ENCODE measurements at regions of chr17 and their contacts with region 1.

Region 1: GRCh38 chr17:28726226-28727130 is at the start of gene TLCD1:
- DNase-seq: peak; percentile 73 to 92
- ATAC-seq: peak; percentile 44 to 56
- H3K4me3 ChIP-seq: peak within 1 kb of the TSS; percentile 63
- H3K27ac ChIP-seq: peak within 1 kb of the TSS; percentile 94 to 98
- H3K4me1 ChIP-seq: peaks cover 46% of the 10 kb centered on the region
- CTCF ChIP-seq: peak; percentile 100
- EP300 ChIP-seq: no peak
- POLR2A ChIP-seq: no peak
- RAD21 ChIP-seq: peak; percentile 100
- polyA plus RNA-seq, gene TLCD1: 83.3 and 86.7 TPM in 2 replicates

Region 2: DNA sequence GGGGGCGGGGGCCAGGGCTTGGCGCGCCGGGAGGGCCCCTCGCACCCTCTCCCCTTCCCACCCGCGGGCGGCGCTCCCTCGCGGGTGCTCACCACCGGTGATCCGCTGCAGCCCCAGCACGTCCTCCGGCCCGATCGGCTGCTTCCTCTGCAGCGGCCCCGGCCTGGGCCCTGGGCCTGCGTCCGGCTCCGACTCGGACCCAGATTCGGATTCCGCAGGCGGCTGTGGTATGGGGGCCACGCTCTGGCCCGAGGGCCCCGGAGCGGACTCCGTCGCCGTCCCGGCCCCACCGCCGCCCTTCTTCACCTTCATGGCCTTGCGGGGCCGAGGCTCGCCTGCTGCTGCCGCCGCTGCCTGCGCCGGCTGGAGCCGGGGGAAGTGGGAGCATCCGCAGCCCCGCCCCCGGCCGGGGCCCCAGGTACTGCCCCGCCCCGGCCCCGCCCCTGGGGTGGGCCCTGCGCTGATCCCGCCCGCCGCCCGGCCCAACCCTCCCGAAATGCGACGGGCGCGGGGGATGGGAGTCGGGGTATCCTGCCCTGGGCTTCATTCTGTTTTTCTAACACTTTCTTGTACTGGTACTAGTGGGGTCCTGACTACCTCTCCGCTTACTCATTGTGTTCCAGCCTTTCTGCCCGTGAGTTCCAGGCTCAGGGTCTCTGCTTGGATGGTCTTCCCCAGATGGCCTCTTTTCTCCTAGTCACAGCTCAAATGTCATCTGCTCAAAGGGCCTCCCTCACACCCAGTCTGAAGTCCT is 174.1 kb before region 1 on chr17 and contains the start of gene UNC119:
- CTCF ChIA-PET with region 1: no interaction called
- POLR2A ChIA-PET with region 1: no interaction called
- DNase-seq: peak; percentile 59 to 89
- ATAC-seq: peak; percentile 75 to 91
- H3K4me3 ChIP-seq: peak within 1 kb of the TSS; percentile 97
- H3K27ac ChIP-seq: peak within 1 kb of the TSS; percentile 79 to 90
- H3K4me1 ChIP-seq: peaks cover 11% of the 10 kb centered on the region
- CTCF ChIP-seq: no peak
- EP300 ChIP-seq: no peak
- POLR2A ChIP-seq: peak; percentile 88
- RAD21 ChIP-seq: no peak
- polyA plus RNA-seq, gene UNC119: 50.5 and 53.5 TPM in 2 replicates

Region 3: GRCh38 chr17:28684963-28685362 is 41.5 kb before region 1 on chr17:
- CTCF ChIA-PET with region 1: interaction called, 23 read pairs
- POLR2A ChIA-PET with region 1: no interaction called
- DNase-seq: peak; percentile 63 to 86
- ATAC-seq: peak; percentile 81 to 87
- H3K4me3 ChIP-seq: no peak overlapping the region
- H3K27ac ChIP-seq: no peak overlapping the region
- H3K4me1 ChIP-seq: no peaks in the 10 kb centered on the region
- CTCF ChIP-seq: peak; percentile 58
- EP300 ChIP-seq: no peak
- POLR2A ChIP-seq: no peak
- RAD21 ChIP-seq: peak; percentile 79 to 80

Region 4: GRCh38 chr17:28777178-28777577 is 50.7 kb after region 1 on chr17:
- CTCF ChIA-PET with region 1: interaction called, 17 read pairs
- POLR2A ChIA-PET with region 1: interaction called, 6 read pairs
- DNase-seq: no peak
- ATAC-seq: peak; percentile 30 to 46; a peak in 3 of 6 replicates
- H3K4me3 ChIP-seq: no peak overlapping the region
- H3K27ac ChIP-seq: no peak overlapping the region
- H3K4me1 ChIP-seq: peaks cover 3% of the 10 kb centered on the region; the same call in 1 of the 3 replicates
- CTCF ChIP-seq: no peak
- EP300 ChIP-seq: no peak
- POLR2A ChIP-seq: no peak
- RAD21 ChIP-seq: no peak

Region 5: DNA sequence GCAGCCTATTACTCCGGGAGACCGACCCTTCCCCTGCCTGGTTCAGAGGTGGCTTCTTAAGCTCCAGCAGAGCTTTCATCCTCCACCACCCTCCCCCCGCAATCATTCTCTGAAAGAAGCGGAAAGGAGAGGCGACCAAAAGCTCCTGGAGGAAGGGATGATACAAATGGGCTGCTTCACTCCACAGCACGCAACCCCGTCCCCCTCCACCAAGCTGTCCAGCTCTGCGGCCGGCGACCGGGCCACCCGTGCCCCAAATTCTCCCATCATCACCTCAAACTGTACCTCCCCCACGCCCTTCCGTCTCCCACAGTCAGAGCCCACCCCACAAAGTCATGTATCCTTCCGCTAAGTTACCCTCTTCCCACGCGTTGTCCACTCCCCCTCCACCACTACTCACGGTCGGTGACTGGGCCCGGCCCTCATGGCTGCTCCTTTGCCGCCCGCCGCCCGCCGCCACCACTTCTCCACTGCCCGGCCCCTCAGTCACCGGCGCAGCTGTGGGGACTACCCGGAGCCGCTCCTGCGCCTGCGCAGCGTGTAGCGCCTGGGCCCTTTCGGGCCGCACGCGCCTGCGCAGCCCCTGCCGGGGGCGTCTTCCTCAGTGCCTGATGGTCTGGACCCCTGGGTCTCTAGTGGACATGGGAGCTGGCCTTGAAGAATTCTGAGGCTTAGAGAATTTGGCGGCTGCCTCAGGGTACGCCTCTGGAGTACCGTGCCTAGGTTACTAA is 116.0 kb after region 1 on chr17 and contains the start of gene FAM222B:
- CTCF ChIA-PET with region 1: interaction called, 19 read pairs
- POLR2A ChIA-PET with region 1: no interaction called
- DNase-seq: peak; percentile 87 to 100
- ATAC-seq: peak; percentile 99 to 100
- H3K4me3 ChIP-seq: peak within 1 kb of the TSS; percentile 82
- H3K27ac ChIP-seq: peak within 1 kb of the TSS; percentile 82 to 92
- H3K4me1 ChIP-seq: peaks cover 11% of the 10 kb centered on the region; the same call in 1 of the 3 replicates
- CTCF ChIP-seq: no peak
- EP300 ChIP-seq: no peak
- POLR2A ChIP-seq: peak; percentile 79
- RAD21 ChIP-seq: no peak; a peak in 1 of 5 replicates
- polyA plus RNA-seq, gene FAM222B: 10.7 and 15.3 TPM in 2 replicates

Region 6: DNA sequence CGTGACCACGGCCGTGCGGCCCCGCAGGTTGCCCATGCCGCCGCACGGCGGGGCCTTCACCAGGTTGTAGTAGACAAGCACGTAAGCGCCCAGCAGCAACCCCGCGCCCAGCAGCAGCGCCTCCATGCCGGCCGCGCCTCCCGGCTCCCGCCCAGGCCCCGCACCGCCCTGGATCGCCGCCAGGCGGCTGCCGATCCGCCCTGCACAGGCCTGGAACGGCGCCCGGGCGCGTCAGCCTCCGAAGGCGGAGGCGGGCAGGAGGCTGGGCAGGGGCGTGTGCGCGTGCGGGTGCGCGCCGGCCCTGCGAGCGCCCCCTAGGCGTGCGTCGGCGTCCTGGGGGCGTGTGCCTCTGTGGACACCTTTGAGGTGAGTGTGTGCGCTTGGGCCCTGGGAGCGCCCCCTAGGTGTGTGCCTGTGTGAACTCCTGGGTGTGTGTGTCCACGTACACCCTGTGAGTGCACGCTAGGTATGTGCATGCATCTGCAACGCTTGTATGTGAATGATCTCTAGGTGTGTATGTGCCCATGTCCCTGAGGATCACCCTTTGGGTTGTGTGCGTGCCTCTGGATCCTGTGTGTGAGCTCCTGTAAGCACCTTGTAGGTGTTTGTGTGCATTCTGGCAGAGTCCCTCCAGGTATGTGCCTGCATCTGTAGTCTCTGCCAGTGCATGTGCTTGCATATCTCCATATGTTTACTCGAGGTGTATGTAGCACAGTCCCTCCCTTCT is 176.5 kb after region 1 on chr17 and contains the start of gene DHRS13:
- CTCF ChIA-PET with region 1: interaction called, 116 read pairs
- POLR2A ChIA-PET with region 1: interaction called, 3 read pairs
- DNase-seq: peak; percentile 97
- ATAC-seq: peak; percentile 91 to 94
- H3K4me3 ChIP-seq: peak within 1 kb of the TSS; percentile 87
- H3K27ac ChIP-seq: peak within 1 kb of the TSS; percentile 76 to 84
- H3K4me1 ChIP-seq: peaks cover 10% of the 10 kb centered on the region
- CTCF ChIP-seq: peak; percentile 100
- EP300 ChIP-seq: no peak
- POLR2A ChIP-seq: no peak
- RAD21 ChIP-seq: peak; percentile 63 to 70
- polyA plus RNA-seq, gene DHRS13: 7.0 and 7.3 TPM in 2 replicates

Region 7: DNA sequence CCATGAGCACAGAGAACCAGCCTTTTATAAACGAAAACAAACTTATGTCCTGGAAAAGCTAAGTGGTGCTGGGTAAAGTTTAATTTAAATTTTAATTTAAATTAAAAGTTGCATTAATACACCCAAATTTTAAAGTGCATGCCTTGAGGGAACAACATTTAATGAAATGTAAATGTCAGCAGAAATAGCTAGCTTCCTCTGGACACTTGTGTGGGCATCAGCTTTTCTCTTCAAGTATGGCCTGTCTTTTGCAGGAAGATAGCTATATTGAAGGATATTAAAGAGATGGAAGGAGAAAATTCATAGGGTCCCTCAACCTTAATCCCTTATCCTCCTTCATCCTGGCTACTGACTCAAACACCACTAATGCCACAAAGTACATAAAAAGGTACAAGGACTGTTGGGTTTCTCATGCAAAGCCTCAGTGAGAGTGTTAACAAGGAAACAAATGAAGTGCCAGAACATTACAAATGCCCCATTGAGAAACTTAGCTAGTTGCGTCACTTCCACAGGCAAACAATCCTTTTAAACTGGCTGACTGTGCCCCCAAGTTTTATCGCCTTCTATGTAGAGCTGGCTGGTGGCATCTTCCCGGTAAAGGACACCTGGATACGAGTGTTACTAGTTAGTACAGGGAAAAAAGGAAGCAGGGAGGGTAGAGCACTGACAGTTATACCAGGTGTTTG is 210.7 kb after region 1 on chr17:
- CTCF ChIA-PET with region 1: interaction called, 12 read pairs
- POLR2A ChIA-PET with region 1: no interaction called
- DNase-seq: no peak
- ATAC-seq: no peak
- H3K4me3 ChIP-seq: no peak overlapping the region
- H3K27ac ChIP-seq: no peak overlapping the region
- H3K4me1 ChIP-seq: peaks cover 18% of the 10 kb centered on the region
- CTCF ChIP-seq: no peak
- EP300 ChIP-seq: no peak
- POLR2A ChIP-seq: no peak
- RAD21 ChIP-seq: no peak

Region 8: GRCh38 chr17:28967221-28968140 is 241.0 kb after region 1 on chr17:
- CTCF ChIA-PET with region 1: interaction called, 48 read pairs
- POLR2A ChIA-PET with region 1: interaction called, 5 read pairs
- DNase-seq: no peak
- ATAC-seq: no peak
- H3K4me3 ChIP-seq: no peak overlapping the region
- H3K27ac ChIP-seq: no peak overlapping the region
- H3K4me1 ChIP-seq: 0 out of 3 replicates have a peak, but pooled peaks cover 6% of the 10 kb centered on the region
- CTCF ChIP-seq: no peak
- EP300 ChIP-seq: no peak
- POLR2A ChIP-seq: no peak
- RAD21 ChIP-seq: no peak

Measured in A549 (cell line).